ENCODE measurements at regions of chr17 and their contacts with region 1.

Region 1: DNA sequence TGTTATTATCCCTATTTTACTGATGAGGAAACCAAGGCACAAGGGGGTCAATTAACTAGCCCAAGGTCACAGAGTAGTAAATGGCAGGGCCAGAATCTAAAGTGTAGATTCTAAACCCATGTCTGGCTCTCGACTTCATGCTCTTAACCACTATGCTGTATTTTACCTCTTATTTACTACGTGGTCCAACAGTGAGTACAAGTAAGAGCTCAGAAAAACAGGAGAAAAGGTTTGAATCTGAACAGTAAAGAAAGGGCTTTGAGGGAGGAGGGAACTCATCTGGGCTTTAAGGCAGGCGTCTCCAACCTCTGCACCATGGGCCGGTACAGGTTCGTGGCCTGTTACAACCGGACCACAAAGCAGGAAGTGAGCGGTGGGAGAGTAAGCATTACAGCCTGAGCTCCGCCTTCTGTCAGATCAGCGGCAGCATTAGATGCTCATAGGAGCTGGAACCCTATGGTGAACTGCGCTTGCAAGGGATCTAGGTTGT is 62.9 kb downstream of the SMURF2 start:
- DNase-seq: peak; percentile 62
- ATAC-seq: peak; percentile 97
- H3K4me3 ChIP-seq: no peak overlapping the region
- H3K4me3 Mint-ChIP-seq: peak overlapping the region; percentile 63
- H3K27ac ChIP-seq: peak overlapping the region in 1 of 2 donors; percentile 69
- H3K27ac Mint-ChIP-seq: peak overlapping the region; percentile 77
- H3K4me1 ChIP-seq: peaks cover 8 to 16% of the 10 kb centered on the region in 2 donors
- H3K4me1 Mint-ChIP-seq: peaks cover 18% of the 10 kb centered on the region
- H3K27me3 ChIP-seq: no peaks in the 10 kb centered on the region
- H3K27me3 Mint-ChIP-seq: no peaks in the 10 kb centered on the region
- CTCF ChIP-seq: no peak

Region 2: DNA sequence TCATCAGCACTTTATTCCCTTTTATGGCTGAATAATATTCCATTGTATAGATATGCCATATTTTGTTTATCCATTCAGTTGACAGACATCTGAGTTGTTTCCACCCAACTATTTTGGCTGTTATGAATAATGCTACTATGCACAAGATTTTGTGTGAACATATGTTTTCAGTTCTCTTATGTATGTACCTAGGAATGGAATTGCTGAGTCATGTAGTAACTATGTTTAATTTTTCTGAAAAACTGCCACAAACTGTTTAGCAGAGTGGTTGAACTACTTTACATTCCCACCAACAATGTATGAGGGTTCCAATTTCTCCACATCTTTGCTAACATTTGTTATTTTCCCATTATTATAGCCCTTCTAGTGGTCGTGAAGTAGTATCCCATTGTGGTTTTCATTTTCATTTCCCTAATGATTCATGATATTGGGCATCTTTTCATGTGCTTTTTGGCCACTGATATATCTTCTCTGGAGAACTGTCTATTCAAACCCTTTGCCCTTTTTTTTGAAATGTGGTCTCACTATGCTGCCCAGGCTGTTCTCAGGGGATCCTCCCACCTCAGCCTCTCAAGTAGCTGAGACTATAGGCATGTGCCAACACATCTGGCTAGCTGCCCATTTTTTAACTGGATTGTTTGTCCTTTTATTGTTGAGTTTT is 36.5 kb after region 1 on chr17:
- CTCF ChIA-PET with region 1: no interaction called
- POLR2A ChIA-PET with region 1: no interaction called
- intact Hi-C with region 1: loop called (anchors 5 kb)
- DNase-seq: no peak
- ATAC-seq: peak; percentile 10
- H3K4me3 ChIP-seq: no peak overlapping the region
- H3K4me3 Mint-ChIP-seq: no peak overlapping the region
- H3K27ac ChIP-seq: no peak overlapping the region
- H3K27ac Mint-ChIP-seq: no peak overlapping the region
- H3K4me1 ChIP-seq: peaks cover 11 to 16% of the 10 kb centered on the region in 2 donors
- H3K4me1 Mint-ChIP-seq: peaks cover 46% of the 10 kb centered on the region
- H3K27me3 ChIP-seq: no peaks in the 10 kb centered on the region
- H3K27me3 Mint-ChIP-seq: no peaks in the 10 kb centered on the region
- CTCF ChIP-seq: no peak

Measured in B cell (primary cell).